Activated CD8-positive, alpha-beta T cell treated with anti-CD3 and anti-CD28 coated beads for 36 hours (primary cell): ENCODE measurements at regions of chr6 and their contacts with region 1.

Region 1: DNA sequence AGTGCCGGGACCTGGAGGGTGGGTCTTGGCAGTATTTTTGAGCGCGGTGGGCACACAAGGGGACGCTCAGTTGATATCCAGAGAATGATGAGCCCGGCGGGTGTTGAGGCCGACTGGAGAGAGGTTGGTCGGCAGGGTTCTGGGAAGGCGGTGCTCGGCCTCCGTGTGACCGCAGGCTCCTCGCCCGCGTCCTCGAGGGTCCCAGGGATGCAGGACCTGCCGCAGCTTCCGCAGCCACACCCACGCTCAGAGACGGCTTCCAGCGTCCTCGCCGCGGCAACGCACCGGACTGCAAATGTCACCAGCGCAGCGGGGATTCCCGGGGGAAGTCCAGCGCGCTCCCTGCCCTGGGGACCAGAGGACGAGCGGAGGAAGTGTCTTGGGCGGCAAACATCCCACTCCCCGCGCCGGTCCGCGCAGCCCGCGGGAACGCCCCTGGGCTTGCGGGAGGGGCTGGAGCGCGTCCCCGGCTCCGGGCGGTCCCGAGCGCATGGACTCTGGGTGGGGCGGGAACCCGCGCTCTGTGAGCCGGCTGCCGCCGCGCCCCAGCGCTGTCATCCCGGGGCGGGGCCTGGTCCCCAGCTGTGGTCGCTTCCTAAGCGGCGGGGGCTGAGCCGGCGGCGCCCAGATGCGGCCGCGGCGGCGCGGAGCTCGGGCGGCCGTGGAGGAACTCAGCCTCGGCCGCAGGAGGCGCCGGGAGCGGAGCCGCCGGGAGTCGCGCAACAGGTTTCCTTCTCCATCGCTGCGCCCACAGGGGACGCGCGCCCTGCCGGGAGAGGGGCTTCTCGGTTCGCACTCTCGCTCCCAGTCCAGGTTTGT is at the start of gene STX11:
- DNase-seq: peak; percentile 91
- ATAC-seq: peak; percentile 77
- H3K4me3 Mint-ChIP-seq: peak within 1 kb of the TSS; percentile 93
- H3K27ac Mint-ChIP-seq: peak within 1 kb of the TSS; percentile 94
- H3K4me1 Mint-ChIP-seq: peaks cover 44% of the 10 kb centered on the region
- H3K27me3 Mint-ChIP-seq: no peaks in the 10 kb centered on the region
- CTCF ChIP-seq: no peak
- total RNA-seq, gene STX11: 19.4 to 20.7 TPM

Region 2: DNA sequence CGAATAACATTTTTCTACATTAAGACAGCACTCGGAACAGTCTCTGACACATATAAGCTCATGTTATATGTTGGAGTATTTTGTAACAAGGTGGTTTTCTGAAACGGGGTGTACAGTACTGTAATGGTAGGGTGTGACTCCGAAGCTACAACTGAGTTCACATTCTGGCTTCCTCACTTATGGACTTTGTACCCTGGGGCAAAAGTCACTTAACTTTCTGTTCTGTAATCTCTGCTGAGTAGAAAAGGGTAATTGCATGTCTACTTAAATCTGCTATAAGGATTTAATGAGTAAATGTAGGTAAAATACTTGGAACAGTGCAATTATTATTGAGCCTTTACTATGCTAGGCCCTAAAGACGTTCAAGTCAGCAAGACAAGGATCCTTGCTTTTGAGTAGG is 311.7 kb before region 1 on chr6:
- CTCF ChIA-PET with region 1: no interaction called
- POLR2A ChIA-PET with region 1: no interaction called
- intact Hi-C with region 1: no loop called
- DNase-seq: no peak
- ATAC-seq: no peak
- H3K4me3 Mint-ChIP-seq: no peak overlapping the region
- H3K27ac Mint-ChIP-seq: no peak overlapping the region
- H3K4me1 Mint-ChIP-seq: peaks cover 4% of the 10 kb centered on the region
- H3K27me3 Mint-ChIP-seq: no peaks in the 10 kb centered on the region
- CTCF ChIP-seq: no peak

Region 3: GRCh38 chr6:144104898-144105487 is 45.1 kb before region 1 on chr6:
- CTCF ChIA-PET with region 1: no interaction called
- POLR2A ChIA-PET with region 1: no interaction called
- intact Hi-C with region 1: loop called (anchors 2 kb)
- DNase-seq: peak; percentile 45
- ATAC-seq: peak; percentile 86
- H3K4me3 Mint-ChIP-seq: no peak overlapping the region
- H3K27ac Mint-ChIP-seq: no peak overlapping the region
- H3K4me1 Mint-ChIP-seq: peaks cover 11% of the 10 kb centered on the region
- H3K27me3 Mint-ChIP-seq: no peaks in the 10 kb centered on the region
- CTCF ChIP-seq: peak; percentile 84

Region 4: DNA sequence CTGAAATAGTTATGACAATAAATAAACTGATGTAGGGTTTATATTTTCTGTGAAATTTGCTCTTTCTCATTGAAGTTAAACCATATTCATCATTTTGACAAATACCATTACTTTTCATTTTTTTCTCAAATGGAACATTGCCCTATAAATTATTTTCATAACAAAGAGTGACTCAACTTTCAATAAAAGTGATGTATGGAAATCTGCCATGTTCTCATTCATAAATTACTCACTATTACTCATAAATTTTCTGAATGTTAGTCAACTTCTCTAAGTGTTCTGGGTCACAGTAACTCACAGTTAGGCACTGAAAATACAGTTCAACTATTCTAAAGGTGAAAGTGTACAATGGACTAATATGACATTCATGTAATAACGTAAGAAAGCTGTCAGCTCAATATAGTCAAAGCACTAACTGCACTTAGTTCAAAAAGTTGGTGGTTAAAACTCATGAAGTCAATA is 18.8 kb before region 1 on chr6:
- CTCF ChIA-PET with region 1: interaction called, 4 read pairs
- POLR2A ChIA-PET with region 1: interaction called, 14 read pairs
- intact Hi-C with region 1: no loop called
- DNase-seq: no peak
- ATAC-seq: peak; percentile 93
- H3K4me3 Mint-ChIP-seq: peak overlapping the region; percentile 42
- H3K27ac Mint-ChIP-seq: peak overlapping the region; percentile 94
- H3K4me1 Mint-ChIP-seq: peaks cover 37% of the 10 kb centered on the region
- H3K27me3 Mint-ChIP-seq: peaks cover 2% of the 10 kb centered on the region
- CTCF ChIP-seq: no peak

Region 5: DNA sequence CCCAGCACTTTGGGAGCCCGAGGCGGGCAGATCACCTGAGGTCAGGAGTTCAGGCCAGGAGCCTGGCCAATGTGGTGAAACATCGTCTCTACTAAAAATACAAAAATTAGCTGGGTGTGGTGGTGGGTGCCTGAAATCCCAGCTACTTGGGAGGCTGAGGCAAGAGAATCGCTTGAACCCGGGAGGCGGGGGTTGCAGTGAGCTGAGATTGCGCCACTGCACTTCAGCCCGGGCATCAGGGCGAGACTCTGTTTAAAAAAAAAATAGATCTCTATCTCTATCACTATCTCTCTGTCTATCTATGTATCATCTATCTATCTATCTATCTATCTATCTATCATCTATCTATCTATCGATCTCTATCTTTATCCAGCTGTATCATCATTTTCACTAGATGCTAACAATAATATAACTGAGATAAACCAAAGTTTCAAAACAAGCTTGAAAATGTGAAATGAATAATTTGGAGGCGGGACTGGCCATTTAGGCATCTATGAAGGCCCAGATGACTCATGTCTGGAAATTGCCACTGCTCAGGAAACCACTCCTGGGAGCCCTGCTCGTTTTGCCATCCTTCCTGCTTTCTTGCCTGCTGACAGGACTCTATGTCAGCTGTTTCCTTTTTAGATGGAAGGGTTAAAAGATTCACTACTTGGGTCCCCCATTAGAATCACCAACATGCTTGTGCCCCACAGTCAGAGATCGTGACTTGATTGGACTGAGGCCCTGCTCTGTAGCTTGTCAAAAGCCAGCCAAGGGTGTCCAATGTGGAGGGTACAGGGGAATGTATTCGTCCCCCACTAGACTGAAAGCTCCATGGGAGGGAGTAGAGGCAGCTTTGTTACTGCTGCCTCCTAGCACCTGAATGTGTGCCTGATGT is 196.7 kb after region 1 on chr6:
- CTCF ChIA-PET with region 1: no interaction called
- POLR2A ChIA-PET with region 1: no interaction called
- intact Hi-C with region 1: no loop called
- DNase-seq: no peak
- ATAC-seq: no peak
- H3K4me3 Mint-ChIP-seq: peak overlapping the region; percentile 50
- H3K27ac Mint-ChIP-seq: peak overlapping the region; percentile 90
- H3K4me1 Mint-ChIP-seq: peaks cover 72% of the 10 kb centered on the region
- H3K27me3 Mint-ChIP-seq: no peaks in the 10 kb centered on the region
- CTCF ChIP-seq: no peak

Region 6: GRCh38 chr6:144482142-144482541 is 332.0 kb after region 1 on chr6:
- CTCF ChIA-PET with region 1: no interaction called
- POLR2A ChIA-PET with region 1: no interaction called
- intact Hi-C with region 1: no loop called
- DNase-seq: peak; percentile 87
- ATAC-seq: peak; percentile 83
- H3K4me3 Mint-ChIP-seq: no peak overlapping the region
- H3K27ac Mint-ChIP-seq: peak overlapping the region; percentile 43
- H3K4me1 Mint-ChIP-seq: peaks cover 21% of the 10 kb centered on the region
- H3K27me3 Mint-ChIP-seq: no peaks in the 10 kb centered on the region
- CTCF ChIP-seq: peak; percentile 71